ENCODE measurements at regions of chr1 and their contacts with region 1.

Region 1: DNA sequence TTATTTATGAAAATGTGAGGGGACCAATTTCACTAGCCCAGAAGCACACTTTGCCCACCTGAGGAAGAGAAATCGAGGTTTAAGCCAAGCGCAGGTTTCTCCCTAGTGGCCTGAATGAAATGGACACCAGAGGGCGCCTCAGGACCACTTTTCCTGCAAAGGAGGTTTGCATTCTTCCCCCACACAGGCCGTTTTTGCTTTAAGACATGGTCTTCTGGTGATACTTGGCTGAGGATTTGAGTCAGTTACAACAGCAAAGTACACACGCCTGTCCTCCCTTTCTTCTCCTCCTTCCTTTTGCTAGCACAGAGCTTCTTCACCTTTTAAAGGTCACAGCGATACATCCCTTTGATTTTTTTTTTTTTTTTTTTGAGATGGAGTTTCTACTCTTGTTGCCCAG is 5.4 kb downstream of the PLA2G2E start:
- DNase-seq: peak; percentile 64
- ATAC-seq: peak; percentile 84
- H3K4me3 ChIP-seq: no peak overlapping the region
- H3K27ac ChIP-seq: no peak overlapping the region
- H3K4me1 ChIP-seq: no peaks in the 10 kb centered on the region
- H3K27me3 ChIP-seq: no peaks in the 10 kb centered on the region
- CTCF ChIP-seq: peak; percentile 91

Region 2: GRCh38 chr1:19033861-19034680 is 884.0 kb before region 1 on chr1:
- CTCF ChIA-PET with region 1: no interaction called
- POLR2A ChIA-PET with region 1: no interaction called
- in situ Hi-C with region 1: no loop called
- intact Hi-C with region 1: no loop called
- DNase-seq: no peak
- ATAC-seq: no peak
- H3K4me3 ChIP-seq: no peak overlapping the region
- H3K27ac ChIP-seq: no peak overlapping the region
- H3K4me1 ChIP-seq: no peaks in the 10 kb centered on the region
- H3K27me3 ChIP-seq: no peaks in the 10 kb centered on the region
- CTCF ChIP-seq: no peak

Region 3: GRCh38 chr1:19775320-19775719 is 142.7 kb before region 1 on chr1:
- CTCF ChIA-PET with region 1: interaction called, 11 read pairs
- POLR2A ChIA-PET with region 1: no interaction called
- in situ Hi-C with region 1: no loop called
- intact Hi-C with region 1: no loop called
- DNase-seq: no peak
- ATAC-seq: no peak
- H3K4me3 ChIP-seq: no peak overlapping the region
- H3K27ac ChIP-seq: no peak overlapping the region
- H3K4me1 ChIP-seq: no peaks in the 10 kb centered on the region
- H3K27me3 ChIP-seq: no peaks in the 10 kb centered on the region
- CTCF ChIP-seq: no peak

Region 4: GRCh38 chr1:20194757-20195461 is 276.9 kb after region 1 on chr1:
- CTCF ChIA-PET with region 1: no interaction called
- POLR2A ChIA-PET with region 1: no interaction called
- in situ Hi-C with region 1: no loop called
- intact Hi-C with region 1: loop called (anchors 5 kb)
- DNase-seq: peak; percentile 35
- ATAC-seq: peak; percentile 79
- H3K4me3 ChIP-seq: no peak overlapping the region
- H3K27ac ChIP-seq: no peak overlapping the region
- H3K4me1 ChIP-seq: no peaks in the 10 kb centered on the region
- H3K27me3 ChIP-seq: peaks cover 20% of the 10 kb centered on the region
- CTCF ChIP-seq: peak; percentile 92

Region 5: DNA sequence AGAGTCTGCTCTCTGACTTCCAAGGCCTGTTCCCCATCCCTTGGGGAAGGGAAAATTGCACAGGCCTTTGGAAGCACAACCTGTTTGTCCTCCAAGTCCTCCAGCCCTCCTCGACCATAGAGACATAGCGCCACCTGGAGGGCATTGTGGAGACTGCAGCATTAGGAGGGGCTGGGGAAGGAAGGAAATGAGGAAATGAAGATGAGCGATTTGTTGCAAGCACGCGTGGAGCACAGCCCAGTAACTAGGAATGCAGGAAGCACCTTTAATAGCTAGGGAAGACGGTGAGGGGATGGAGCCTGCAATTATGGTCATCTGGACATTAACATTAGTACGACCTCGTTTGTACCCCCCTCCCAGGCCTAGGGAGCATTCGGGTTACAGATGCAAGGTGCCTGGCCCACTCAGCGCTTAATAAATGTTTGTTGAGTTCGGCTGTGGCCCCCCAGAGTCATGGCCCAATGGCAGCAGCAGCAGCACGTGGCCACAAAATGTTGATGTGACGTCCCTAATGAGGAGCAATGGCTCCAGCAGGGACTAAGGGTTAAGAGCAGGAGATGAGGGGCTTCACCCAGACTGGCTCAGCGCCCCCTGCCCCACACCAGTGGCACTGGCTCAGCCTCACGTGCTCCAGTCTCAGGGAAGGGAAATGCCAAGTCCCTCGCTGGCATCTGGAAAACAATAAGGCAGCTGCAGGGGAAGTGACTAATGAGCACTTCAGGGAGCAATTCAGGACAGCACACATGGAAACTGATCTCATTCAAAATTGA is 576.0 kb after region 1 on chr1:
- CTCF ChIA-PET with region 1: interaction called, 6 read pairs
- POLR2A ChIA-PET with region 1: no interaction called
- in situ Hi-C with region 1: no loop called
- intact Hi-C with region 1: loop called (anchors 5 kb)
- DNase-seq: peak; percentile 90
- ATAC-seq: peak; percentile 72
- H3K4me3 ChIP-seq: no peak overlapping the region
- H3K27ac ChIP-seq: no peak overlapping the region
- H3K4me1 ChIP-seq: no peaks in the 10 kb centered on the region
- H3K27me3 ChIP-seq: no peaks in the 10 kb centered on the region
- CTCF ChIP-seq: peak; percentile 94

Measured in Panc1 (cell line).